GM13976 (cell line): ENCODE measurements at regions of chr12 and their contacts with region 1.

Region 1: GRCh38 chr12:77816196-77816595 is 14.5 kb upstream of the NAV3 start:
- DNase-seq: peak; percentile 22
- CTCF ChIP-seq: no peak

Region 2: DNA sequence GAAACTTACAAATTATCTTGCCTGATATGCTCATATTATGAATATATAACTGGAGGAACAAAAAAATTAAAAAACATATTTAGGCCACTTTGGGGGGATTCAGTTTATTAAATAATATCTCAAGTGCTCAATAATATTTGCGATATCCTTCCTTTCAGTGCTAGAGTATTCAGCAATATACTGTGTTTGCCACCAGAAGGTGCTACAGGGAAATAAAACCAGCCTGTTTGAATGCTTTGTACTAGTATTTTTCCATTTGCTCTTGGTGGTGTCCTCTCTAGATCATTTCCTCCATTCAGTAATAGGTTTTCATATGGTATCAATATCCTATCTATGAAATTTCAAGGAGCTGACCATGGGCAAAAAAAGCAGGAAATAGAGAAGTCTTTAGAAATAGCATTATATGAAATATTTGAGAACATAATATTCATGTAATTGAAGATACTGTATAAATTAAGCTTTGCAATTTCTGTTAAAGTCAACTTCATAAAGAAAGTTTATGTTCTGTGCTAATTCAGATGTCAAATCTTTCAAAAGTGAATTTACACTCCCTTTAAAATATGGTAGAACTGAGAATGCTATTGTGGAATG is 91.7 kb before region 1 on chr12:
- in situ Hi-C with region 1: loop called (anchors 25 kb)
- DNase-seq: no peak
- CTCF ChIP-seq: peak; percentile 56